ENCODE measurements at regions of chr11 and their contacts with region 1.

Region 1: DNA sequence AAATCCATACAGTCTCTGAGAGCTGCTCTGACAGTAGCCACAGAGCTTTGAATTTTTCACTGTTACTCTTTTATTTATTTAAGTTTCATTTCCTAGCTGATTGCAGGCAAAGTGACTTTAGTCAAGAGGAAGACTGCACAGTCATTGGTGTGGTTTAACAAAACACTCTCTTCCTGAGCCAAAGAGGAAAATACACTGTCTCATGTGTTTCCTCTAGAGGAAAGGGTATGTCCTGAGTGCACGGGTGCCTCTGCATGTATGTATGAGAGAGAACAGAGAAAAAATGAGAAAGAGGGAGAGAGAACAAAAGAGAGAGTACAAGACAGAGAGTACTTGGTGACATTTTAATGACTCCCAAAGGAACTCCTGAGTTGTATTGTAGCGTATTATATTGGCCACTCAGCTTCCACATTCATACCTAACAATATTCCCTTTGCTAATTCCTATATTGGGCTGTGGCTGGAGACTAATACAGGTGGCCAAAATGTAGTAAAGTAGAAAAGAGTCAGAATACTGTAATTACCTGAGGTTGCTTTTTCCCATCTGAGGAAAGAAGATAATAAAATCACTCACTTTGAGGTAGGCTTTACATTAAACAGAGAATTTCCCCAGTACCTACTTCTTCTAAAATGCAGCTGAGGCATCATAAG is at the start of gene OR4D9:
- DNase-seq: no peak
- H3K4me3 ChIP-seq: no peak within 1 kb of the TSS
- H3K27ac ChIP-seq: peak within 1 kb of the TSS in 1 of 2 donors; percentile 2
- H3K4me1 ChIP-seq: no peaks in the 10 kb centered on the region
- H3K27me3 ChIP-seq: no peaks in the 10 kb centered on the region
- CTCF ChIP-seq: no peak
- POLR2A ChIP-seq: no peak
- total RNA-seq, gene OR4D9: not detected

Region 2: GRCh38 chr11:58711832-58712231 is 799.2 kb before region 1 on chr11:
- intact Hi-C with region 1: loop called (anchors 5 kb)
- DNase-seq: no peak
- H3K4me3 ChIP-seq: no peak overlapping the region
- H3K27ac ChIP-seq: no peak overlapping the region
- H3K4me1 ChIP-seq: no peaks in the 10 kb centered on the region
- H3K27me3 ChIP-seq: no peaks in the 10 kb centered on the region
- CTCF ChIP-seq: no peak
- POLR2A ChIP-seq: no peak

Measured in breast epithelium (tissue), 4 donors.